AG04449 (cell line): ENCODE measurements at regions of chr11 and their contacts with region 1.

Region 1: DNA sequence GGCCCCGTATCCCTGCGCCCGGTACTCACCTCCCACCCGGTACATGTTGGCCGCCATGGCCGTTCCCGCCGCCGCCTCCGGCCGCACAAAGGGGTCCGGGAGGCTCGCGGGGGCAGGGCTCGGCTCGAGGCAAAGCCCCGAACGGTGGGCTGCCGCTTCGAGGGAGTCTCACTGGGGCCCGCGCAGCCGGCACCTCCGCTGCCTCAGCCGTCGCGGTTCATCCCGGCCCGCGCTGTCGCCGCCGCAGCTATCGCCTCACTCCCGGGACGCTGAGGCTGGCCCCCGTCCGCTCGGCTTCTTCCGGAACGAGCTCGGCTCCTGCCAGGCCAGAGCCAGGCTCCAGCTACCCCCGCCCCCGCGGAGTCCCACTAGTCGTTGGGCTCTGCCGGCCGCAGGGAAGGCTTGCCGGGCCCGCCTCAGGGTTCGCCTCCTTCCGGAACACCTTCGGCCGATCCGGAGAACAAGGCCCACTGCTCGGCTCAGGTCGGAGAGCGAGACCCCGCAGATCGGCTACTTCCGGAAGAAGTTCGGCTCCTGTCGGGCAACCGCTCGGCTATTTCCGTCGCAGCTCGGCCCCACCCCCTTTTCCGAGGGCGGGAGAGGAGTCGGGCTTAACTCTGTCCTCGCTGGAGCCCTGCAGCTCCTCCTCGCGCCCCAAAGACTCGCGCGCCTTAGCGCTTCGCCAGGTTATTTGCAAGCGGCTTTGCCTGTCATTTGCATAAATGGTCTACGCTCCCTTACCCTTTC is at the start of gene MTA2:
- DNase-seq: peak; percentile 89
- H3K4me3 ChIP-seq: peak within 1 kb of the TSS; percentile 82
- CTCF ChIP-seq: no peak

Region 2: DNA sequence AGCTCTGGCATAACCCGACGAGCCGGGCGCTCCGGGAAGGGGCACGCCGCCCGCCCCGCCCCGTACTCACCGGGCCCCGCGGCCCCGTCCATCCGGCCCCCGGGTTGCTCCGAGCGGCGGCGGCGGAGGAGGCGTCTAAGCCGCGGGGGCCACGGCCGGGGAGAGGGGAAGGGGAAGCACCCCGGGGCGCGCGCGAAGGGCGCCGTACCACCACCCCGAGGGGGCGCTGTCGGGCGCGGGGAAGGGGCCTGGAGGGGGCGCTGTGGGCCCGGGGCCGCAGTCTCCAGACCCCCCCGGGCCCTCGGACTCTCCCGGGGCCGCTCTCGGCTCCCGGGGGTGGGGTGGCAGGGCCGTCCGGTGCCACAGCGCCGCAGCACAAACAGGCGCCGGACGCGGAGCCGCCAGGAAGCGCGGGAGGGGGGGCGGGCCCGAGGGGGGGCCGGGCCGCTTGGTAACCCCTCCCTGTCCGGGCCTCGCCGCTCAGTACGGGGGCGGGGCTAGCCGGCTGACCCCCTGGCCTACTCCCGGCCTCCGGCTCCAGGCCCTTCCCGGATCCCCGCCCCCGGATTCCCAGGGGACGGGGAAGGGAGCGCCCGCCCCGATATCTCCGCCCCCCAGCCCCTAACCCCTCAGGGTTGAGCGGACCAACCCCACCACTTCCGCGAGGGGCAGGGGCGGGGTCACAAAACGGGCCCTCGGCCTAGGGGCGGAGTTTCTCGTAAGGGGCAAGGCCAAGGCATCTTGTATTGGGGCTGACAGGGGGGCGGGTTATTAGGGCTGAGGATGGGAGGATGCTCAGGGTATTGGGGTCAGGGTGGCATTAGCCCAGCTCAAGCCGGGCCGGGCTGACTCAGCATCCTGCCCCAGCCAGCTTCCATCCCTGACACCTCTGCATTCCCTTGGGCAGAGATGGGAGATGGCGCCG is 11.1 kb after region 1 on chr11 and contains the starts of genes EML3 and ROM1:
- CTCF ChIA-PET with region 1: interaction called, 95 read pairs
- POLR2A ChIA-PET with region 1: interaction called, 7 read pairs
- DNase-seq: no peak
- H3K4me3 ChIP-seq: peak within 1 kb of the TSS; percentile 75
- CTCF ChIP-seq: peak; percentile 95

Region 3: GRCh38 chr11:62621567-62622470 is 20.3 kb after region 1 on chr11 and contains the start of gene B3GAT3:
- CTCF ChIA-PET with region 1: interaction called, 6 read pairs
- POLR2A ChIA-PET with region 1: interaction called, 12 read pairs
- DNase-seq: peak; percentile 82
- H3K4me3 ChIP-seq: peak within 1 kb of the TSS; percentile 83
- CTCF ChIP-seq: peak; percentile 24

Region 4: DNA sequence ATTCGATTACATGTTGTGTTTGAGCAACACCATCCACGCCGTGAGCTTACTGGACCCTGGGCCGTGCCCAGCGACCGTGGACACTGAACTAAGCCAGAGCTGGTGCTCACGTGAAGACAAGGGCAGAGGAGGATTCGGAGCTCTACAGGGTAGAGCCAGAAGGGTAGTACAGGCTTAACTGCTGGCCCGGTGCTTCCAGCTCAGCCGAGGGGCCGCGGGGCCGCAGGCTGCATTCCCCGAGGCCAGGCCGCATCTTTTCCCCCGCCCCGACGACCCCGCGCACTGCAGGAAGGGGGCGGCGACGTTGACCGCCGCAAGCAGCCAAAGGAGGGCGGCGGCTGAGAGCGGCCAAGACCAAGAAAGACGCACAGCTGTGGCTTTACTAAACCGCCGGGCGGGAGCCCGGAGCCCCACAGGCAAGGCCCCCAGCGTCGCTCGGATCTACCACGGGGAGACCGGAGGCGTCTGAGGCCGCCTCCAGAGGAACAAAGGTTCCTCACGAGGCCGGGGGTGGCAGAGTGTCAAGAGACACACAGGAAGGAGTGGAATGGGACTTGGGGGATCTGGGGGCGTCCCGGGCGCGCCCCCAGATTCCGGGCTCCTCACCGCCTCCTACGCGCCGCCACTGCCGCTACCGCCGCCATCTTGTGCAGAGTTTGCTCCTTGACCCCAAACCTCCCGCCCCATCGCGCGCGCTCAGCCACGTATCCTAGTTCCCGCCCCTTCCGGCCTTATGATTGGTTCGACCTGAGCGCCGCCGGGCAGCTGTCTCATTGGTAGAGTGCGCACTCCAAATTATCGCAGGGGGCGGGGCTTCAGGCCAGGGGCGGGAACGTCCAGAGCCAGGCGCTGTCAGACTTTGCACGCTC is 44.6 kb after region 1 on chr11 and contains the start of gene GANAB:
- CTCF ChIA-PET with region 1: no interaction called
- POLR2A ChIA-PET with region 1: no interaction called
- DNase-seq: peak; percentile 87
- H3K4me3 ChIP-seq: peak within 1 kb of the TSS; percentile 91
- CTCF ChIP-seq: no peak